CD8-positive, alpha-beta T cell (primary cell): ENCODE measurements at regions of chr11 and their contacts with region 1.

Region 1: GRCh38 chr11:35485656-35486322 is 39.6 kb downstream of the PAMR1 start:
- DNase-seq: peak; percentile 34 to 80 (median 69)
- ATAC-seq: peak; percentile 68
- H3K4me3 ChIP-seq: no peak overlapping the region
- H3K4me3 Mint-ChIP-seq: no peak overlapping the region
- H3K27ac ChIP-seq: no peak overlapping the region
- H3K27ac Mint-ChIP-seq: no peak overlapping the region
- H3K4me1 ChIP-seq: no peaks in the 10 kb centered on the region
- H3K4me1 Mint-ChIP-seq: no peaks in the 10 kb centered on the region
- H3K27me3 ChIP-seq: no peaks in the 10 kb centered on the region
- H3K27me3 Mint-ChIP-seq: peaks cover 51% of the 10 kb centered on the region
- CTCF ChIP-seq: peak; percentile 97

Region 2: GRCh38 chr11:34840736-34841386 is 644.9 kb before region 1 on chr11:
- CTCF ChIA-PET with region 1: no interaction called
- POLR2A ChIA-PET with region 1: no interaction called
- intact Hi-C with region 1: loop called in 1 of 2 experiments (anchors 1 kb)
- DNase-seq: peak in 5 of 9 experiments; percentile 7 to 49 (median 43)
- ATAC-seq: no peak
- H3K4me3 ChIP-seq: no peak overlapping the region
- H3K4me3 Mint-ChIP-seq: no peak overlapping the region
- H3K27ac ChIP-seq: no peak overlapping the region
- H3K27ac Mint-ChIP-seq: no peak overlapping the region
- H3K4me1 ChIP-seq: no peaks in the 10 kb centered on the region
- H3K4me1 Mint-ChIP-seq: no peaks in the 10 kb centered on the region
- H3K27me3 ChIP-seq: no peaks in the 10 kb centered on the region
- H3K27me3 Mint-ChIP-seq: peaks cover 15% of the 10 kb centered on the region
- CTCF ChIP-seq: peak; percentile 52